CD4-positive, alpha-beta T cell (primary cell): ENCODE measurements at regions of chr15 and their contacts with region 1.

Region 1: DNA sequence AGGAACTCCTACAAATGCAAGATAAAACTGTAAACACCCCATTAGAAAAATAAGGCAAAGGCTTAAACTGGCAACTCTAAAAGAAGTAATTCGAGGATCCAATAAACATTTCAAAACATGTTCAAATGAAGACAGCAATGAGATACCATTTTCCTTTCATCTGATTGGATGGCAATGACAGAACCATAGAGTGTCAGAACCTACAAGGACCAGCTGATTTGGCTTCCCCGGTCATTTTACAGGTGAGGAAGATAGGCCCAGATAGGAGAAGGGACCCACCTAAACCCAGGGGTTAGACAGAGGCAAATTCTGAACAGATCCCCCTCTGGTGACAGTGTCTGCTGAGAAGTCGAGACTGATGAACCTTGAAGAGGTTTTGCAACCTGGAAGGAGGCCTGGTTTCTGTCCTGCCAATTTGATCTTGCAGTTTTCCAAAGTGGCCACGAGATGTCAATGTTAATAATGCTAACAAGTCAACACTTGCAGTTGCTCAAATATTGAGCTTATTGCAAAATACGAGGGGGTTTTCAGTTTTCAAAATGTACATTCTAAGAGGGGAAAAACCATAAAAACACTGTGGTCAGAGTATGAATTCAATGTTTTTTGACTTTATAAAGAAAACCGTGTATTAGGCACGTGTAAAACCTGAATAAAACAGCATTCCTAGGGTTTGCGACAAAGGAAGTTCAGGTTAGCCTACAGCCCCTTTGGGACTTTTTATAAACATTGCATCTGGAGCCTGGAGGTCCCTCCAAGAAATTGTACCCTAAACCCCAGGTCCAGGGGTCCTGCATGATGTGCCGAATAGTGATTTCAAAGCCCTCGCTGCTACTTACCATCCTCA is 21.5 kb downstream of the CFAP161 start:
- DNase-seq: peak in 5 of 14 experiments; percentile 3 to 51 (median 40)
- ATAC-seq: no peak
- H3K4me3 ChIP-seq: no peak overlapping the region
- H3K4me3 Mint-ChIP-seq: no peak overlapping the region
- H3K27ac ChIP-seq: no peak overlapping the region
- H3K27ac Mint-ChIP-seq: no peak overlapping the region
- H3K4me1 ChIP-seq: peaks cover under 1% of the 10 kb centered on the region
- H3K4me1 Mint-ChIP-seq: peaks cover under 1% of the 10 kb centered on the region
- H3K27me3 ChIP-seq: no peaks in the 10 kb centered on the region
- H3K27me3 Mint-ChIP-seq: peaks cover 23% of the 10 kb centered on the region
- CTCF ChIP-seq: peak; percentile 43

Region 2: DNA sequence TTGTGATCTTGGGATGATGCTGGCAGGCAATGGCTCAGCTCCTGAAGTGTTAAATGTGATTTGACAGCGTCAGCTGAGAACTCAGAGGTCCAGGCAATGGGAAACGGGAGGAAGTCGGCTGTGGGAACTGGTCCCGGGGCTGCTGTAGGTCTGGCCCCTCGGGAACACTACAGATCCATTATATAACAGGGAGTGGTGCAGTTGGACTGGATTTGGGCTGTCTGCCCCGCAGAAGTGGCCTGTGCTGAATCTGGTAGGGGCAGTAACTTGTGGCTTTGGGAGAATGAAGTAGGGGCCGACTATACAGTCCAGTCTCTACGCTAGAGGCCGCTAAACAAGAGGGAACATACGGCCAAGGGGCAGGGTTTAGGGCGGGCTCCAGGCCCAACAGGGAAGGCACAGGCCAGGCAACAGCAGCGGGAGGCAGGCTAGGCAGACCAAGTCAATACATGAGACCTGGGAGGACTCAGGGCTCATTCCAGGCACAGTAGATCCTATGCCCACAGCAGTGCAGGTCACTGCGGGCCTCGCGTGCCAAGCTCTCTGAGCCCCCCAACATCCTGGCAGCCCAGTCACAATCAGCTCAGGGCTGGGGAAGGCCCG is 20.8 kb after region 1 on chr15:
- CTCF ChIA-PET with region 1: no interaction called
- POLR2A ChIA-PET with region 1: no interaction called
- intact Hi-C with region 1: no loop called
- DNase-seq: no peak
- ATAC-seq: no peak
- H3K4me3 ChIP-seq: no peak overlapping the region
- H3K4me3 Mint-ChIP-seq: no peak overlapping the region
- H3K27ac ChIP-seq: no peak overlapping the region
- H3K27ac Mint-ChIP-seq: no peak overlapping the region
- H3K4me1 ChIP-seq: no peaks in the 10 kb centered on the region
- H3K4me1 Mint-ChIP-seq: no peaks in the 10 kb centered on the region
- H3K27me3 ChIP-seq: peaks cover 0 to 7% of the 10 kb centered on the region in 2 experiments
- H3K27me3 Mint-ChIP-seq: peaks cover 20% of the 10 kb centered on the region
- CTCF ChIP-seq: no peak

Region 3: DNA sequence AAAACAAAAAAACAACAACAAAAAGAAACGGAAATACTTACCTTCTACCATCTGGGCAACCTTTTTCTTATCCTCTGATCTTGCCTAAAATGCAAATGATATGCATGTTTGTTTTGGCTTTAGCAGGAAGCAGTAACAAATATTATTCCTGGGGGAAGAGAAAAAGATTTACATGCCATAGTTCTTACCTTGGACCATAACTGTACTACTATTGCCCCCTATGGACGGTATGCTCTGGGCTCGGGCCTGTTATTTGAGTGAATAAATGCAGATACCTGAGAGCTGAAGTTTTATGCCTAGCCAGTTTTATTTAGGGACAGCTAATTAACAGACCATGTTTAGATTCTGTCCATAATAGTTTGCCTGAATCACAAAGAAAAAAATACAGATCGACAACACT is 181.0 kb after region 1 on chr15:
- CTCF ChIA-PET with region 1: no interaction called
- POLR2A ChIA-PET with region 1: no interaction called
- intact Hi-C with region 1: loop called in 1 of 2 experiments (anchors 5 kb)
- DNase-seq: peak in 11 of 14 experiments; percentile 23 to 71 (median 50)
- ATAC-seq: no peak
- H3K4me3 ChIP-seq: no peak overlapping the region
- H3K4me3 Mint-ChIP-seq: no peak overlapping the region
- H3K27ac ChIP-seq: no peak overlapping the region
- H3K27ac Mint-ChIP-seq: no peak overlapping the region
- H3K4me1 ChIP-seq: no peaks in the 10 kb centered on the region
- H3K4me1 Mint-ChIP-seq: peaks cover 13% of the 10 kb centered on the region
- H3K27me3 ChIP-seq: no peaks in the 10 kb centered on the region
- H3K27me3 Mint-ChIP-seq: no peaks in the 10 kb centered on the region
- CTCF ChIP-seq: peak; percentile 71

Region 4: GRCh38 chr15:82262422-82263026 is 1106.9 kb after region 1 on chr15 and contains the starts of genes EFL1 and SAXO2:
- CTCF ChIA-PET with region 1: no interaction called
- POLR2A ChIA-PET with region 1: no interaction called
- intact Hi-C with region 1: no loop called
- DNase-seq: peak; percentile 72 to 94 (median 86)
- ATAC-seq: peak; percentile 95
- H3K4me3 ChIP-seq: peak within 1 kb of the TSS; percentile 72
- H3K4me3 Mint-ChIP-seq: peak within 1 kb of the TSS; percentile 95
- H3K27ac ChIP-seq: peak within 1 kb of the TSS in 1 of 2 donors; percentile 31
- H3K27ac Mint-ChIP-seq: peak within 1 kb of the TSS; percentile 79
- H3K4me1 ChIP-seq: peaks cover 12% of the 10 kb centered on the region
- H3K4me1 Mint-ChIP-seq: peaks cover 38% of the 10 kb centered on the region
- H3K27me3 ChIP-seq: no peaks in the 10 kb centered on the region
- H3K27me3 Mint-ChIP-seq: no peaks in the 10 kb centered on the region
- CTCF ChIP-seq: no peak
- total RNA-seq, gene EFL1: 7.1 to 7.8 TPM
- total RNA-seq, gene SAXO2: 11.1 to 14.9 TPM